Left cardiac atrium (tissue), 4 donors: ENCODE measurements at regions of chr10 and their contacts with region 1.

Region 1: DNA sequence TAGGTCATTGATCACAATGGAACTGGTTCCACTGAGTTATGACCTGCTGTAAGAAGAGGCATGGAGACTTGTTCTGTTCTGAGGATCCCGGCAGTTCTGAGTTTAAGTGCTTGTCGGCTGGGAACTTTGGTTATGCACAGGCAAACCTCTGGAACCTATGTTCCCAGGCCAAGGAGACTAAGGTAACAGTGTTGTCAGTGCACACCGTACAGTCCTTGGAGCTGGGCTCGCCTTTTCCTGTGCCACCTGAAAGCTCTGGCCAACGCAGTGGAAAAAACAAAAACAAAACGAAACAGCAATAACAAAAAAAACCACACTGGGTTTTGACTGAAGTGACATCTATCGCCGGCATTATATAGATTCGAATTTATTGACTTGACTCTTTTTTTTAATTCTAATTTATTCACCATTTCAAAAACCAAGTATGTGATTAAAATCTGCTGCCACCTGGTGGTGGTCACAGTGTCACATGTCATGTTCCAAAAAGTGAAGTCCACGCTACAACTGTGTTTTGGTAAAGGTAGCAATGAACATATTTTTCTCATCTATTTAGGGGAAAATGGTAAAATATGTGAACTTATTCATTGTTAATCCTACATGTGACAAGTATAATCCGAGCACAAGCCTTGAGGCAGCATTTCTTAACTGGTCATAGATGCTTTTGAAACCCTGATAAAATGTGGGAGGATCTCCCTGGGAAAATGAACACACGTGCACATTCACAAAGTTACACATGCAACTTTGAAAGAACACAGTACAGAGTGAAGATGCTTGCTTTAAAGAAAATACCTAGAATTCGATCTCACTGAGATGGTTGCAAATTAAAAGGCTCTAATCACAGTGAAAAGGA is 113.8 kb upstream of the PPP2R2D start:
- DNase-seq: no peak
- ATAC-seq: no peak

Region 2: GRCh38 chr10:130190055-130190736 is 1596.8 kb before region 1 on chr10:
- intact Hi-C with region 1: loop called in 1 of 2 experiments (anchors 5 kb)
- DNase-seq: peak; percentile 90
- ATAC-seq: peak; percentile 93 to 95

Region 3: DNA sequence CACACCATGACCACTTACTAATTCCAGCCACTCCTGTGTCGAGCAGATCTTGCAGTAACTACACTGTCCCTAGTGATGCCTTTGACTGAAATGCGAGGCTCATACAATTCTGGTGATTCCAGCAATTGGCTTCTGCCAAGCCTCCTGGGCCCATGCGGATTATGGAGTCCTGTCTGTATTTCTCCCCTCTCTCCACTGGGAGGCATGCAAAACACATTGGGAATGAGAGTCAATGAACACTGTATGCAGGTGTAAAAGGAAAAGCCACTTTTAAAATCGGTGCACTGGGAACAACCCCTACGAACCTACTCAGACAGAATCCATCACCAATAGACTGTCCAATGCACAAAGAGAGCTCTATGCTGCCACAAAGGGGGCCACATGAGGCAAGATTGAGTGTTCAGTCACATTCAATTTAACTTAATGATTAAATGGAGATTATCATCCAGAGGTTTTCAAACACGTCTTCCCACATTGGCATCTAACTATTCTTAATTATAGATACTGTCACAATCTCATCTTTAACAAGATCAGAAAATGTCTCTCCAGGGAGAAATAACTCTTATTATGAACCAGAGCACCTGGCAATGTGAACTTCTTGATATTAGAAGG is 1100.2 kb before region 1 on chr10:
- intact Hi-C with region 1: loop called in 1 of 2 experiments (anchors 5 kb)
- DNase-seq: no peak
- ATAC-seq: peak in 1 of 2 donors; percentile 46

Region 4: GRCh38 chr10:131453594-131454355 is 333.2 kb before region 1 on chr10:
- intact Hi-C with region 1: loop called in 1 of 2 experiments (anchors 10 kb)
- DNase-seq: peak; percentile 72
- ATAC-seq: peak; percentile 67 to 86